Activated CD8-positive, alpha-beta memory T cell treated with anti-CD3 and anti-CD28 coated beads, Interleukin-2, amount 10 ng/mL, durations not matched to agents 7 days and 5 days (primary cell): ENCODE measurements at regions of chr17 and their contacts with region 1.

Region 1: GRCh38 chr17:45218895-45219661 is 2.6 kb upstream of the FMNL1 start:
- DNase-seq: peak; percentile 89
- ATAC-seq: no peak
- H3K4me3 Mint-ChIP-seq: peak overlapping the region; percentile 88
- H3K27ac Mint-ChIP-seq: peak overlapping the region; percentile 62
- H3K4me1 Mint-ChIP-seq: peaks cover 34% of the 10 kb centered on the region
- H3K27me3 Mint-ChIP-seq: no peaks in the 10 kb centered on the region

Region 2: GRCh38 chr17:45148183-45149036 is 70.7 kb before region 1 on chr17 and contains the start of gene HEXIM1:
- CTCF ChIA-PET with region 1: interaction called, 58 read pairs
- DNase-seq: peak; percentile 99
- ATAC-seq: peak; percentile 76
- H3K4me3 Mint-ChIP-seq: peak within 1 kb of the TSS; percentile 99
- H3K27ac Mint-ChIP-seq: peak within 1 kb of the TSS; percentile 100
- H3K4me1 Mint-ChIP-seq: peaks cover 43% of the 10 kb centered on the region
- H3K27me3 Mint-ChIP-seq: peaks cover 2% of the 10 kb centered on the region
- total RNA-seq, gene HEXIM1: 40.2 to 42.4 TPM

Region 3: GRCh38 chr17:45172454-45173286 is 46.4 kb before region 1 on chr17:
- CTCF ChIA-PET with region 1: interaction called, 10 read pairs
- DNase-seq: peak; percentile 62
- ATAC-seq: peak; percentile 68
- H3K4me3 Mint-ChIP-seq: peak overlapping the region; percentile 48
- H3K27ac Mint-ChIP-seq: peak overlapping the region; percentile 89
- H3K4me1 Mint-ChIP-seq: peaks cover 21% of the 10 kb centered on the region
- H3K27me3 Mint-ChIP-seq: no peaks in the 10 kb centered on the region

Region 4: GRCh38 chr17:45235416-45236281 is 16.6 kb after region 1 on chr17:
- CTCF ChIA-PET with region 1: interaction called, 386 read pairs
- DNase-seq: peak; percentile 82
- ATAC-seq: peak; percentile 60
- H3K4me3 Mint-ChIP-seq: no peak overlapping the region
- H3K27ac Mint-ChIP-seq: peak overlapping the region; percentile 69
- H3K4me1 Mint-ChIP-seq: peaks cover 58% of the 10 kb centered on the region
- H3K27me3 Mint-ChIP-seq: no peaks in the 10 kb centered on the region

Region 5: GRCh38 chr17:45256114-45256966 is 37.3 kb after region 1 on chr17:
- CTCF ChIA-PET with region 1: interaction called, 14 read pairs
- DNase-seq: no peak
- ATAC-seq: peak; percentile 32
- H3K4me3 Mint-ChIP-seq: no peak overlapping the region
- H3K27ac Mint-ChIP-seq: peak overlapping the region; percentile 15
- H3K4me1 Mint-ChIP-seq: peaks cover 32% of the 10 kb centered on the region
- H3K27me3 Mint-ChIP-seq: no peaks in the 10 kb centered on the region

Region 6: GRCh38 chr17:45277216-45277849 is 58.3 kb after region 1 on chr17:
- CTCF ChIA-PET with region 1: interaction called, 154 read pairs
- DNase-seq: peak; percentile 94
- ATAC-seq: peak; percentile 98
- H3K4me3 Mint-ChIP-seq: no peak overlapping the region
- H3K27ac Mint-ChIP-seq: peak overlapping the region; percentile 54
- H3K4me1 Mint-ChIP-seq: peaks cover 15% of the 10 kb centered on the region
- H3K27me3 Mint-ChIP-seq: no peaks in the 10 kb centered on the region

Region 7: DNA sequence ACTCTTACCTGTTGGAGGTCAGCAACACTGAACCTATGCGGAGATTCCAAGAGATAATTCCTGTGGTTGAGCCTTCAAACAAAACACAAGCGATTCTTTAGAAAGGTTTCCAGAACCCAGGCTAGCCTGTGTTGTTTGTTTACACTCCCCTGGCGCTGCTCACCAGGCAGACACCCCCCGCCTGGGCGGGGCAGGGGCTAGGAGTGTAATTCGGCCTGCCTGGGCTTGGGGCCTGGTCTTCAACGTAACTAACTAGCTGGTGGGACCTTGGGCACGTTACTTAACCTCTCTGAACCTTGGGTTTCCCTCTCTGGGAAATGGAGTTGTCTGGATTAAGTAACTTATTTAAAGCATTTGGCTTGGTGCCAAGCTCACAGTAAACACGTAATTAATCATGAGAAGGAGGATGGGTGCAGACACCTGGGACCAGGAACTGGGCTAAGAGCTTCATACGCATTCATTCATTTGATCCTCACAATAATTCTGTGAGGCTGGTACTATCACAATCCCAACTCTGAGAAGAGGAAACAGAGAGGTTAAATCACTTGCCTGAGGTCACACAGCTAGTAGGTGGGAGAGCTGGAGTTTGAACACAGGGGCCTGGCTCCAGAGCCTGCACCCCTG is 221.2 kb after region 1 on chr17:
- CTCF ChIA-PET with region 1: no interaction called
- DNase-seq: no peak
- ATAC-seq: no peak
- H3K4me3 Mint-ChIP-seq: no peak overlapping the region
- H3K27ac Mint-ChIP-seq: peak overlapping the region; percentile 68
- H3K4me1 Mint-ChIP-seq: peaks cover 18% of the 10 kb centered on the region
- H3K27me3 Mint-ChIP-seq: no peaks in the 10 kb centered on the region